ENCODE measurements at regions of chr1 and their contacts with region 1.

Region 1: GRCh38 chr1:39761525-39762260 is 9.5 kb downstream of the OXCT2 start:
- DNase-seq: no peak
- ATAC-seq: peak; percentile 25
- H3K4me3 ChIP-seq: no peak overlapping the region
- H3K27ac ChIP-seq: no peak overlapping the region
- H3K4me1 ChIP-seq: no peaks in the 10 kb centered on the region
- H3K27me3 ChIP-seq: no peaks in the 10 kb centered on the region
- CTCF ChIP-seq: no peak
- POLR2A ChIP-seq: no peak
- RAD21 ChIP-seq: no peak

Region 2: DNA sequence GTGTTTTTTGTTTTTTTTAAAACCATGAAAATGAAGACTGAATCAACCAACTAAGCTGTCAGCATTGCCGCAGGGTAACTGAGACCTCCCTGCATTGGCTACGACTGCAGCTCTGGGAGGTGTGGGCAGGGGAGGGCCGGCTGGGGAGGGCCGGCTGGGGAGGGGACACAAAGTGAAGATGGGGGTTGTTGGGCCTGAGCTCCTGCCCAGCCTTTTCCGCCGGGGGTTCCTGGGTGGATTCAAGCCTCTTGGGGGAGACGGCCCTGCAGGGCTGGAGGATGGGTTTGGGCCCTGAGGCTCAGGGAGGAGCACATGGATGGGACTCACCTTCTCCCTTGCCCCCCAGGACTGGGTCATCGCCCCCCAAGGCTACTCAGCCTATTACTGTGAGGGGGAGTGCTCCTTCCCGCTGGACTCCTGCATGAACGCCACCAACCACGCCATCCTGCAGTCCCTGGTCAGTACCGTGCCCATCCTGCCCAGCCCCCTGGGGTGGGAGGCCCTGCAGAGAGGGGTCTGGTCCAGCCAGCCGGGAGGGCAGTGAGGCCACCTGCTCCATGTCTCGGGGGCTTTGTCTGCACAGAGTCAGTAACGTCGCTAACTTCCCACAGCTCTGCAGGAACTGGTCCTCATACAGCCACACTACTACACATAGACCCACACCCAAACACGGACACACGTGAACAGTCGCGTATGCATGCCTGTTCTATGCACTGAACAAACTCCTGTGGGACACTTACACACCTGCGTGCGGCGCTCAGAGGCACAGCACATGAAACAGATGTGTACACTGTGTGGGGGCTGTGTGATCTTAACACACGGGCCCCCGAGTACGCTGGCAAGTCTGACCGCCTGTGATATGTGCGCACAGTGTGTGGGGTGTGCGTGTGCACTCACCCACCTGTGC is 238.8 kb before region 1 on chr1:
- CTCF ChIA-PET with region 1: no interaction called
- POLR2A ChIA-PET with region 1: no interaction called
- dilution Hi-C with region 1: no loop called
- in situ Hi-C with region 1: no loop called
- intact Hi-C with region 1: loop called (anchors 5 kb)
- DNase-seq: no peak
- ATAC-seq: no peak
- H3K4me3 ChIP-seq: no peak overlapping the region
- H3K27ac ChIP-seq: no peak overlapping the region
- H3K4me1 ChIP-seq: no peaks in the 10 kb centered on the region
- H3K27me3 ChIP-seq: no peaks in the 10 kb centered on the region
- CTCF ChIP-seq: no peak
- POLR2A ChIP-seq: no peak
- RAD21 ChIP-seq: no peak

Region 3: DNA sequence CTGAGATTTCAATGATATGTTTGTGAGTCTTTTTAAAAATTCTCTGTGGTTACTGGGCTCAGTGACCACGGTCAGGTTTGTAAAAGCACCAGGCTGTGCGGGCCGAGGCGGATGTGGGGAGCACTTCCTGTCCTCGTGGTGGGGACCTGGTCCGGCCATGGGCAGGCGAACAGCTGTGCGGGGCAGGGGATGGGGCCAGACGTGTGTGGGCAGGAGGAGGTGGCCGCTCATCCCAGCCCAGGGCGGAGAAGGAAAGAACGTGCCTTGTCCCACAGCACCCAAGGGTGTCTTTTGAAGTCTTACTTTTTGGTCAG is 14.7 kb after region 1 on chr1:
- CTCF ChIA-PET with region 1: no interaction called
- POLR2A ChIA-PET with region 1: no interaction called
- dilution Hi-C with region 1: no loop called
- in situ Hi-C with region 1: no loop called
- intact Hi-C with region 1: no loop called
- DNase-seq: no peak
- ATAC-seq: no peak
- H3K4me3 ChIP-seq: no peak overlapping the region
- H3K27ac ChIP-seq: no peak overlapping the region
- H3K4me1 ChIP-seq: no peaks in the 10 kb centered on the region
- H3K27me3 ChIP-seq: peaks cover 24% of the 10 kb centered on the region
- CTCF ChIP-seq: no peak
- POLR2A ChIP-seq: no peak
- RAD21 ChIP-seq: no peak

Measured in IMR-90 (cell line).